GM18951 (cell line): ENCODE measurements at regions of chr2 and their contacts with region 1.

Region 1: GRCh38 chr2:196277002-196277401 is 105.6 kb upstream of the STK17B start:
- POLR2A ChIP-seq: no peak

Region 2: DNA sequence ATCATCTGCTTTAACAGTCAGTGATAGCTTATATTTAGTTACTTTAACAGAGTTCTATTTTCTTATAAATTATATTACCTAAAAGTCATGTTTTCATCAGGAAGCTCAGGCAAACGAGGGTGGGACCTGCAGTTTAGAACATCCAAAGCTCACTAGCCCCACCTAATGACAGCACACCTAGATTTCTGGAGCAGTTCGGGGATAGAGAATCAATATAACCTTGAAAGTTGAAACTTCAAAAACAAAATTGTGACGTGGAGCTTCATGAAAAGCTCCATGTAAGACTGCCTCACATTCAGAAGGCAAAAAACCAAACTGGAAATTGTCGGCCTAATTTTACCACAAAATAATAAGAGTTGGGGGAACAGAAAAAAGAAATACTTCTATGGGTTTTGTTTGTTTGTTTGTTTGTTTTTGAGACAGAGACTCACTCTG is 176.6 kb after region 1 on chr2:
- in situ Hi-C with region 1: loop called (anchors 25 kb)
- POLR2A ChIP-seq: no peak